ENCODE measurements at regions of chr11 and their contacts with region 1.

Region 1: DNA sequence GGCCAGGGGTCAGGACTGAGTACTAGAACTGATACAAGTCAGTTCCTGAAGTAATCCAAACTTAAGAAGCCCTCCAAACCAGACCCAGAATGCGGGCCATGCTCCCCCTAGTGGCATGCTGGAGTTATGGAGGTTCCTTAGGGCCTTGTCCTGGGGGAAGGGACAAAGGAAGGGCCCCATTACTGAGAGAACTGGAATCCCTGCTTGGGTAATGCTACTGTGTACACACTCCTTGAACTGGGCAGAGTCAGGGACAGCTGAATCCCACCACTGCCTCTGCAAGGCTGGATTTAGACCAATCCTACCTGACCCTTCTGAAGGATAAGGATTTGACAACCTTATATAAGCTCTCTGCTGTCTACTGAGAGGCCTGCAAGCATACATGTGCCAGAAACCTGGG is 97.3 kb upstream of the AKIP1 start:
- DNase-seq: peak; percentile 77
- ATAC-seq: peak; percentile 81 to 86
- H3K4me3 ChIP-seq: no peak overlapping the region
- H3K27ac ChIP-seq: peak overlapping the region; percentile 70
- H3K4me1 ChIP-seq: peaks cover 54% of the 10 kb centered on the region
- H3K27me3 ChIP-seq: no peaks in the 10 kb centered on the region
- CTCF ChIP-seq: peak; percentile 90

Region 2: DNA sequence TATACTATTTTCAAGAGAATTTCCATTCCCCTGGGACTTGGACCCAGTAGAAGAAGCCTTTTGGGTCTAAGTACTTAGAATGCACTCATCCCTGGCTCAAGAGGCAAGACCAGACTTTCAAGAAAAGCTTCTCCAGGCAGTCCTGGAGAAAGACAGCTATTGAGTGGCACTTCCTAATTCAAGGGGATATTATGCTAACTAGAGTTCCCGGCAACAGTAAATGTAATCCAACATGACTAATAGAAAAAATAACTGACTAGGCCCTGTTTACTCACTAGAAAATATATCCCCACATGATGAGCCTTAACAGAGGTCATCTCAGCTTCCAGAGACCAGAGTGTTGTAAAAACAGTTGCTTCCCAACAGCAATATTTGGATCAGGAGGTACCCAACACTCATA is 50.2 kb after region 1 on chr11:
- intact Hi-C with region 1: loop called (anchors 10 kb)
- DNase-seq: no peak
- ATAC-seq: peak; percentile 66 to 83
- H3K4me3 ChIP-seq: no peak overlapping the region
- H3K27ac ChIP-seq: peak overlapping the region; percentile 66
- H3K4me1 ChIP-seq: peaks cover 37% of the 10 kb centered on the region
- H3K27me3 ChIP-seq: no peaks in the 10 kb centered on the region
- CTCF ChIP-seq: no peak

Region 3: GRCh38 chr11:8989453-8989852 is 175.8 kb after region 1 on chr11:
- intact Hi-C with region 1: no loop called
- DNase-seq: no peak
- ATAC-seq: no peak
- H3K4me3 ChIP-seq: no peak overlapping the region
- H3K27ac ChIP-seq: no peak overlapping the region
- H3K4me1 ChIP-seq: peaks cover 7% of the 10 kb centered on the region
- H3K27me3 ChIP-seq: no peaks in the 10 kb centered on the region
- CTCF ChIP-seq: no peak

Measured in lower lobe of right lung (tissue), 2 donors.